ENCODE measurements at regions of chr1 and their contacts with region 1.

Region 1: DNA sequence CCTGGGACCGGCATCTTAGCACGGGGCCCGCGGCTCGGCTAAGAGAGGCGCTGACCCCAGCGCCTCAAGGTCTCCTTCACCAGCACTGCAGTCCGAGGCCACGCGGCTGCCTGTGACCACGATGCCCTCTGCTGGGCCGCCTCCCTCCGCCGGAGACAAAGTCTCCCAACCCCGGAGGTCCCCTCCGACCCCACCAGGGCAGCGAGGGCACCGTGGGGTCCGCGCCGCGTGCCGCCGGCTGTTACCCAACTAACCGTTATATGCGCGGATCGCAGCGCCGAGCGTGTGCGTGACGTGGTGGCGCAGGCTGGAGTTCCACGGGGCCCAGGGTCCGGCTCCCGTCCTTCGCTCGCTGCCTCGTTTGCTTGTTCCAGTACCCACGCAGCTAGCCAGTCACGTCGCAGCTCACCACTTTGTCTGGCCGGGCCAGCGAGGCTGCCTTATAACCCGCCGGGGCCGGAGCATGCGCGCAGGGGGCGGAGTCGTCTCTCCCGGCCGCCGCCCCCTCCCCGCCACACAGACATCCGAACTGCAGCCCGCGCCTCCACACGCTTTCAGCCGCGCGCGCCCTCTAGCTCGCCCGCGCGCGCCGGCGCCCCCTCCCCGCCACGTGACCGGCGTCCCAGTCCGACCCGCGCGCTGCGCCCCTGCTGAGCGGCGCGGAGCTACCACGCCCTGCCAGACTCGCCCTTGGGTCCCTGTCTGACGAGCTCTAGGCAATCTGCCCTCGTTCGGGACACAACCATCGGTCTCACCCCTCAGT is at the start of gene SLC16A1:
- DNase-seq: peak; percentile 92 to 94
- H3K4me3 ChIP-seq: peak within 1 kb of the TSS; percentile 90 to 93
- H3K27ac ChIP-seq: peak within 1 kb of the TSS; percentile 91 to 97
- H3K4me1 ChIP-seq: peaks cover 0 to 36% (median 18%) of the 10 kb centered on the region in 4 donors
- H3K27me3 ChIP-seq: no peaks in the 10 kb centered on the region
- CTCF ChIP-seq: peak in 1 of 2 experiments; percentile 11

Region 2: DNA sequence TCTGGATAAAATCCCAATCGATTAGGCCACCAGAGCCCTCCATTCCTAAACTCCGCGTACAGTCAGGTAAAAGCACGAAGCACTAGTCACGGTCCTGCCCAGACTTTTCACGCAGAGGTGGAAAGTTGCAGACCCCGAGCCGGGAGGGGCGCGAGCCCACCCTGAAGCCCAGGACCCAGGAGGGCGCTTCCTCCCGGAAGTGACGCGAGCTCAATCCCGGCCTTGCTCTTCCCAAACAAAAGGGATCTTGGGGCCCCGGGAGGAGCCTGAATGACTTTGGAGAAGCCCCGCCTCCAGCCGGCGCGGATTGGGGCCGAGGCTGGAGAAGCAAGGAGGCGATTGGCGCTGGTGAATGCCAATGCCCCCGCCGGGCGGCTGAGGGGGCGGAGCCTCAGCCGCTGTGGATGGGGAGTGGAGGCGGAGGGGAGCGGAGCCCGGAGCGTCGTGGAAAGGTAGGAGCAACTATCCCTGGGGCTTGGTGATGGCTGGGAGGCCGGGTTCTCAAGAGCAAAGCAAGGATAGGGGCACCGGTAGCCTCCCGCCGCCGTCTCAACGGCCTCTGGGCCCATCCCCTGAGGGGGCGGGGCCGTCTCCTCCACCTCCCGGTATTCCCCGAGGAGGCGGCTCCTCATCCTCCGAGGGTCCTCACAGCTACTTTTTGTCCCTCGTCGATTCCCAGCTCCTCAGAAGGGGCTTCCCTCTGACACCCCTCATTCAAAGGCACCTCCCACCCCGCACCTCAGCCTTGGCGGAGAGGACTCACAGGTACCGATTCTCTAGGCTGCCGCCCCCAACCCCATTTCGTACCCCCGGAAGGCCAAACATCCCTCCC is 559.9 kb before region 1 on chr1 and contains the start of gene CTTNBP2NL:
- intact Hi-C with region 1: loop called (anchors 5 kb)
- DNase-seq: peak; percentile 98
- H3K4me3 ChIP-seq: peak within 1 kb of the TSS; percentile 65 to 96
- H3K27ac ChIP-seq: peak within 1 kb of the TSS; percentile 93 to 94
- H3K4me1 ChIP-seq: peaks cover 0 to 72% (median 38%) of the 10 kb centered on the region in 4 donors
- H3K27me3 ChIP-seq: no peaks in the 10 kb centered on the region
- CTCF ChIP-seq: no peak

Region 3: GRCh38 chr1:112715264-112716053 is 240.5 kb before region 1 on chr1 and contains the start of gene PPM1J:
- intact Hi-C with region 1: loop called (anchors 10 kb)
- DNase-seq: peak; percentile 98 to 99
- H3K4me3 ChIP-seq: peak within 1 kb of the TSS; percentile 60 to 67
- H3K27ac ChIP-seq: peak within 1 kb of the TSS; percentile 64 to 70
- H3K4me1 ChIP-seq: peaks cover 0 to 38% (median 27%) of the 10 kb centered on the region in 4 donors
- H3K27me3 ChIP-seq: peaks cover 0 to 15% of the 10 kb centered on the region in 2 donors
- CTCF ChIP-seq: no peak

Measured in tibial artery (tissue), 4 donors.